CD8-positive, alpha-beta memory T cell (primary cell): ENCODE measurements at regions of chr21 and their contacts with region 1.

Region 1: GRCh38 chr21:44405948-44406872 is 49.1 kb upstream of the LRRC3 start:
- DNase-seq: no peak
- H3K4me3 ChIP-seq: no peak overlapping the region
- H3K4me3 Mint-ChIP-seq: no peak overlapping the region
- H3K27ac ChIP-seq: no peak overlapping the region
- H3K27ac Mint-ChIP-seq: peak overlapping the region in 3 of 8 donors; percentile 51 to 71 (median 63)
- H3K4me1 ChIP-seq: no peaks in the 10 kb centered on the region
- H3K4me1 Mint-ChIP-seq: peaks cover 3 to 7% (median 4%) of the 10 kb centered on the region in 3 donors
- H3K27me3 ChIP-seq: no peaks in the 10 kb centered on the region
- H3K27me3 Mint-ChIP-seq: no peaks in the 10 kb centered on the region

Region 2: GRCh38 chr21:44326716-44327602 is 79.3 kb before region 1 on chr21:
- CTCF ChIA-PET with region 1: no interaction called
- POLR2A ChIA-PET with region 1: no interaction called
- DNase-seq: no peak
- H3K4me3 ChIP-seq: no peak overlapping the region
- H3K4me3 Mint-ChIP-seq: no peak overlapping the region
- H3K27ac ChIP-seq: no peak overlapping the region
- H3K27ac Mint-ChIP-seq: peak overlapping the region in 1 of 8 donors; percentile 21
- H3K4me1 ChIP-seq: no peaks in the 10 kb centered on the region
- H3K4me1 Mint-ChIP-seq: no peaks in the 10 kb centered on the region
- H3K27me3 ChIP-seq: no peaks in the 10 kb centered on the region
- H3K27me3 Mint-ChIP-seq: no peaks in the 10 kb centered on the region

Region 3: GRCh38 chr21:44347911-44348753 is 58.1 kb before region 1 on chr21:
- CTCF ChIA-PET with region 1: no interaction called
- POLR2A ChIA-PET with region 1: no interaction called
- DNase-seq: no peak
- H3K4me3 ChIP-seq: no peak overlapping the region
- H3K4me3 Mint-ChIP-seq: no peak overlapping the region
- H3K27ac ChIP-seq: no peak overlapping the region
- H3K27ac Mint-ChIP-seq: no peak overlapping the region
- H3K4me1 ChIP-seq: peaks cover 10% of the 10 kb centered on the region
- H3K4me1 Mint-ChIP-seq: peaks cover 10 to 17% (median 14%) of the 10 kb centered on the region in 3 donors
- H3K27me3 ChIP-seq: peaks cover 4% of the 10 kb centered on the region
- H3K27me3 Mint-ChIP-seq: peaks cover 7 to 16% of the 10 kb centered on the region in 2 donors

Region 4: DNA sequence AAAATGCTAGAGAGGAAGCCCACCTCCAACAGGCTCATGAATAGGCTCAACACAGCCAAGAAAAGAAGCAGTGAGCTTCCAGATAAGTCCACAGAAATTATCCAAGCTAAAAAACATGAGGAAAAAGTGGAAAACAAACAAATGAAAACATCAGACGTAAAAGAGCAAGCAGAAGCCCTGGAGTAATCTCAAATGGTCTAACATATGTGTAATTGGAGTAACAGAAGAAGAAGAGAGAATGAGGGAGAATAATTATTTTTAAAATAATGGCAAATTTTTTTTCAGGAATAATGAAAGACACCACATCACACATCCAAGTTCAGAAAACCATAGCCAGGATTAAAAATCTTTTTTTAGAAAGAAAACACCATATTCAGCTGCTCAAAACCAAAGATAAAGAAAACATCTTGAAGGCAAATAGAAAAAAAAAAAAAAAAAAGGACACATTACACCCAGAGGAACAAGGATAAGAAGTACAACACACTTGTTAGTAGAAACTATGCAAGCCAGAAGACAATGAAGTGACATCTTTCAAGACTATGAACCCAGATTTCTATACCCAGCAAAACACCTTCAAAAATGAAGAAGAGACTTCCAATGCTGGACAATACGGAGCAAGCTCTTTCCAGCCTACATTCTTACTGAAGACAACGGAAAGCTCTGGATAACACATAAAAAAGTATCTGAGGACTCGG is 422.3 kb after region 1 on chr21:
- CTCF ChIA-PET with region 1: no interaction called
- POLR2A ChIA-PET with region 1: interaction called, 12 read pairs
- DNase-seq: no peak
- H3K4me3 ChIP-seq: no peak overlapping the region
- H3K4me3 Mint-ChIP-seq: no peak overlapping the region
- H3K27ac ChIP-seq: no peak overlapping the region
- H3K27ac Mint-ChIP-seq: peak overlapping the region in 2 of 8 donors; percentile 61
- H3K4me1 ChIP-seq: no peaks in the 10 kb centered on the region
- H3K4me1 Mint-ChIP-seq: peaks cover 0 to 9% (median 6%) of the 10 kb centered on the region in 3 donors
- H3K27me3 ChIP-seq: no peaks in the 10 kb centered on the region
- H3K27me3 Mint-ChIP-seq: peaks cover 4 to 6% of the 10 kb centered on the region in 2 donors